ENCODE measurements at regions of chr2 and their contacts with region 1.

Region 1: DNA sequence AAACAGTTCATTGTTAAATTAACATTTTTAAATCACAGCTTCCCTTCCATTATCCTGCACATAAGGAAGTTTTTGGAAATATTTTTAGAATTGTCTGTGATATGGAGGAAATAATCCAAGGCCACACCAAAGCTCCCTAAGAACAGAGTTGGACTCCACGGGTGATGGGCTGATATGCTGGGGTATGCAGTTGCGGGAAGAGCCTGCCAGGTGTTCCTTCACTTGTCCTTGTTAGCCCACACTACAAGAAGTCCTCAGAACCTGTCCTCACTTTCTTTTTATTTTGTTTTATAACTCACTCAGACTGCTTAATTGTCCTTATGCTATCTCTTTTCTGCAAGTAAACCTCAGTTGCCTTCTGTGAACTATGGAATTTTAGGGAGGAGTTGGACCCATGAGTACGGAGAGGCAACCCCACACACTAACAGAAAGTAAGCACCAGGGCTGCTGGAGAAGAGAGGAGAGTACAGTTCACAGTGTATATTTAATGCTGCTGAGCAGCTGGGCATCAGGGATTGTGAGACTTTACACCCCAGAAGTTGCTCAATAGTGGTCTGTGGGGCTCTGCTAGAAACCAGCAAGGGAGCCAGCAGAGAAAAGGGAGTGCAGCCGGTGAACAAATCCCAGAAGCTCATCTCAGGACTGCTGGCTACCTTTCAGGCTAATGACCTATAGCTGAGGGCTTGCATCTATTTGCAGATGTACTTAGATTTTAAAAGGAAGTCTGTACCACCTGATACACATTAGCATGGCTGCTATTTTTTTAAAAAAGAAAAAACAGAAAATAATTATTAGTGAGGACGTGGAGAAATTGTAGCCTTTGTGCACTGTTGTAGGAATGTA is 280.1 kb upstream of the STON1 start:
- DNase-seq: peak in 2 of 3 donors; percentile 15 to 34
- H3K4me3 ChIP-seq: peak overlapping the region in 2 of 3 experiments; percentile 25 to 61
- H3K4me3 Mint-ChIP-seq: peak overlapping the region; percentile 42 to 72
- H3K27ac ChIP-seq: peak overlapping the region; percentile 51 to 80
- H3K27ac Mint-ChIP-seq: peak overlapping the region in 6 of 7 donors; percentile 90 to 95 (median 93)
- H3K4me1 ChIP-seq: peaks cover 68 to 77% of the 10 kb centered on the region in 2 donors
- H3K4me1 Mint-ChIP-seq: peaks cover 37% of the 10 kb centered on the region
- H3K27me3 ChIP-seq: no peaks in the 10 kb centered on the region
- H3K27me3 Mint-ChIP-seq: peaks cover 0 to 1% (median 0%) of the 10 kb centered on the region in 3 donors
- CTCF ChIP-seq: no peak

Region 2: GRCh38 chr2:48306409-48307284 is 56.8 kb after region 1 on chr2:
- intact Hi-C with region 1: loop called in 1 of 2 experiments (anchors 10 kb)
- DNase-seq: no peak
- H3K4me3 ChIP-seq: no peak overlapping the region
- H3K4me3 Mint-ChIP-seq: no peak overlapping the region
- H3K27ac ChIP-seq: no peak overlapping the region
- H3K27ac Mint-ChIP-seq: no peak overlapping the region
- H3K4me1 ChIP-seq: peaks cover 0 to 5% of the 10 kb centered on the region in 2 donors
- H3K4me1 Mint-ChIP-seq: peaks cover 6% of the 10 kb centered on the region
- H3K27me3 ChIP-seq: no peaks in the 10 kb centered on the region
- H3K27me3 Mint-ChIP-seq: peaks cover 0 to 1% (median 1%) of the 10 kb centered on the region in 3 donors
- CTCF ChIP-seq: no peak

Measured in CD14-positive monocyte (primary cell).